WTC11 (cell line): ENCODE measurements at regions of chr1 and their contacts with region 1.

Region 1: GRCh38 chr1:151934048-151934493 is 24.8 kb upstream of the THEM4 start:
- DNase-seq: peak; percentile 29
- ATAC-seq: peak; percentile 90
- H3K4me3 Mint-ChIP-seq: no peak overlapping the region
- H3K27ac Mint-ChIP-seq: no peak overlapping the region; the same call in 1 of the 2 replicates
- H3K4me1 Mint-ChIP-seq: peaks cover 17% of the 10 kb centered on the region
- H3K27me3 Mint-ChIP-seq: peaks cover 2% of the 10 kb centered on the region; the same call in 1 of the 2 replicates
- CTCF ChIP-seq: peak; percentile 67

Region 2: DNA sequence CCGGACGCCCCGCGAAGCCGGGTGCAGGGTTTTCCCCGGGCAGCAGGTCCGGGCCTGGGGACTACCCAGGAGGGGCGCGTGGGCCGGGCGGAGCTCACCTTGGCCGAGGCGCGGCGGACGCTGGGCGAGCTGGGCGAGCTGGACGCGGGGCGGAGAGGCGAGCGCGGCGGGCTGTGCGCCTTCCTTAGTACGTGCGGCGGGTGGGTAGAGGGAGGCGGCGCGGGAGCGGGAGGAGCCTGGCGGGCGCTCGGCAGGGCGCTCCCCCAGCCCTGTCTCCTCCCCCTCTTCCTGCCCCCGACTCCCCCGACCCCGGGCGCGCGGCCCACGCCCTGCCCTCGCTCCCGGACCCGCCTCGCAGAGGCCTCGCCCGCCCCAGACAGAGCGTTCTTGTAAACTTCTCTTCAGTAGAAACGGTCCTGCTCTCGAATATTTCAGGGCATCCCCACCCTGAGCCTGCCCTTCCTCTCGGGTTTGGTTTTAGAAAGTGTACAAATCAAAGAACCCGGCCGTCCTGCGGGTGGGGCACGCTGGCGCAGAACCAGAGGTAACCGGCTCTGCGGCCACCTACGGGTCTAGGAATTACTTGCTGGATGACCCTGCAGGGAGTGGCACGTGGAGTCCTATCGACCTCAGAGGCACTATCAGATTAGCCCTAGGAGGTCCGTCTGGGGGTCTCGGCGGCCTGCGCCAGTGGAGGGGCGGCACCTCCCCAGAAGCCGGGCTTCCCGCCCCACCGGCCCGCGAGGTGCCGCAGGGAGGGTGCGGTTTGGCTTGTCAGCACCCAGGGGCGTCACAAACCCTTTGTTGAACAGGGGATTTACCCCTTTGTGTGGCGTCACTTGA is 59.8 kb after region 1 on chr1 and contains the start of gene S100A10:
- CTCF ChIA-PET with region 1: interaction called, 149 read pairs
- POLR2A ChIA-PET with region 1: no interaction called
- DNase-seq: peak; percentile 63
- ATAC-seq: peak; percentile 56
- H3K4me3 Mint-ChIP-seq: peak within 1 kb of the TSS; percentile 93
- H3K27ac Mint-ChIP-seq: peak within 1 kb of the TSS; percentile 86
- H3K4me1 Mint-ChIP-seq: peaks cover 49% of the 10 kb centered on the region
- H3K27me3 Mint-ChIP-seq: peaks cover 8% of the 10 kb centered on the region; the same call in 1 of the 2 replicates
- CTCF ChIP-seq: no peak; the same call in 1 of the 2 replicates
- total RNA-seq, gene S100A10: 150 to 161 TPM (median 159 TPM) in 3 replicates

Region 3: GRCh38 chr1:152013664-152014237 is 79.7 kb after region 1 on chr1:
- CTCF ChIA-PET with region 1: interaction called, 37 read pairs
- POLR2A ChIA-PET with region 1: no interaction called
- DNase-seq: peak; percentile 66
- ATAC-seq: peak; percentile 74
- H3K4me3 Mint-ChIP-seq: no peak overlapping the region
- H3K27ac Mint-ChIP-seq: peak overlapping the region; percentile 66
- H3K4me1 Mint-ChIP-seq: peaks cover 27% of the 10 kb centered on the region
- H3K27me3 Mint-ChIP-seq: no peaks in the 10 kb centered on the region
- CTCF ChIP-seq: no peak